ENCODE measurements at regions of chr22 and their contacts with region 1.

Region 1: DNA sequence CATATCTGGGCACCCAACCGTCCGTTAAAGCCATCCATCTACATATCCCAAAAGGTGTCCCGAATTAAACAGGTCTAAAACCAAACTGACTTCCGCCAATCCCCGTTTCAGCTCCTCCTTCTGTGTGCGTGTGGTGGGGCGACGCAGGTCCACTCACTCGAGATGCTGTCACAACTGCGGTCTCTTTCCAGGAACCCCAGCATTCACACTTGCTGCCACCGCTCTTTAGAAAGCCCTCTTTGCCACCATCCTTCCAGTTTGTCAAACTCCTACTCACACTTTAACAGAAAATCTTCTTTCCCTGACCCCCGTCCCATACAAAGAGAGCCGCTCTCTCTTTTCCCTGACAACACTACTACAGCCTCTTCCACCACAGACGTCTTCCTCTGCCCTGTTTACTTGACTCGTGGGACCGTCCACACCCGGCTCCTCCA is 467 bp downstream of the ESS2 start:
- DNase-seq: no peak
- H3K4me3 ChIP-seq: peak overlapping the region; percentile 78
- H3K27me3 ChIP-seq: peaks cover 22% of the 10 kb centered on the region
- CTCF ChIP-seq: no peak

Region 2: DNA sequence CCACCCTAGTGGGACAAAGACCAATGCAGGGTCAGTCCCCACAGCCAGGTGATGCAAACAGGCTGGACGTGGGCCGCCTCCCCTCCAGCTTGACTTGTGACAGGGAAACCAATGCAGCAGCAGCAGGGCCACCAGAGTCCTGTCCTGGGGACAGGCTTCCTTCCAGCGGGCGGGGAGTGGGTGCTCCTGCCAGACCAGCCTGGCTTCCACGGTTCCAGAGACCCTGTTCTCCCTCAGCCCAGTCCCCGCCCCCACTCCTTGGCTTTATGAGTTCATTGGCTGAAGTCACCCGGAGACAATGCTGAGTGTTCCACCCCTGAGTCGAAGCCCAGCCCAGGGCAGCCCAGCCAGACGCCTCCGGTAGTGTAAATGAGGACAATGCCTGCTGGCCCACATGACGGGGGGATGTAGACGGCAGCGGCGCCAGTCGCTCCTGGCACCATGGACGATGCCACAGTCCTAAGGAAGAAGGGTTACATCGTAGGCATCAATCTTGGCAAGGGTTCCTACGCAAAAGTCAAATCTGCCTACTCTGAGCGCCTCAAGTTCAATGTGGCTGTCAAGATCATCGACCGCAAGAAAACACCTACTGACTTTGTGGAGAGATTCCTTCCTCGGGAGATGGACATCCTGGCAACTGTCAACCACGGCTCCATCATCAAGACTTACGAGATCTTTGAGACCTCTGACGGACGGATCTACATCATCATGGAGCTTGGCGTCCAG is 12.9 kb before region 1 on chr22 and contains the start of gene TSSK2:
- CTCF ChIA-PET with region 1: interaction called, 16 read pairs
- POLR2A ChIA-PET with region 1: no interaction called
- DNase-seq: no peak
- H3K4me3 ChIP-seq: no peak within 1 kb of the TSS
- H3K27me3 ChIP-seq: no peaks in the 10 kb centered on the region
- CTCF ChIP-seq: no peak
- polyA plus RNA-seq, gene TSSK2: not detected in 2 replicates

Measured in BJ (cell line).